ENCODE measurements at regions of chr19 and their contacts with region 1.

Region 1: GRCh38 chr19:53183146-53183764 is 9.9 kb downstream of the ZNF665 start:
- DNase-seq: no peak
- ATAC-seq: no peak
- H3K4me3 ChIP-seq: no peak overlapping the region
- H3K27ac ChIP-seq: no peak overlapping the region
- H3K4me1 ChIP-seq: no peaks in the 10 kb centered on the region
- H3K27me3 ChIP-seq: no peaks in the 10 kb centered on the region

Region 2: DNA sequence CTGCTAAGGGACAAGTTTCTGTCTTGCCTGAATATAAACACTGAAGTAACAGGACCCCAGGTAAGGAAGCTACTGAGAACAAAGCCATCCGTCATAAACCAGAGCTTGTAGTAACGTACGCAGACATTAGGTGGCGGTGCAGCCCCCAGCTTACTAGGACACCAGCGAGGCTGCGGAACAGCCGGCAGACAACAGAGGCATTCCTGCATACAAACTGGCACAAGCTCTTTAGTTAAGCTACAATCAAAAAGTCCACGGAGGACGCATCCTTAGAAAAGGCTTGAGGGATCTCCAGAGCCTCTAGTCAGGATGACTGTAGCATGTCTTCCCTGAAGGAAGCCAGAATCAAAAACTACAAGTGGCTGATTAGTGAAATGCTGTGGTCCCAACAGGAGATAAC is 106.3 kb before region 1 on chr19:
- intact Hi-C with region 1: loop called in 1 of 4 experiments (anchors 5 kb)
- DNase-seq: peak; percentile 60 to 87 (median 78)
- ATAC-seq: peak; percentile 79 to 84
- H3K4me3 ChIP-seq: no peak overlapping the region
- H3K27ac ChIP-seq: no peak overlapping the region
- H3K4me1 ChIP-seq: no peaks in the 10 kb centered on the region
- H3K27me3 ChIP-seq: no peaks in the 10 kb centered on the region

Measured in right cardiac atrium (tissue), 5 donors.